Esophagus squamous epithelium (tissue), 5 donors: ENCODE measurements at regions of chr2 and their contacts with region 1.

Region 1: DNA sequence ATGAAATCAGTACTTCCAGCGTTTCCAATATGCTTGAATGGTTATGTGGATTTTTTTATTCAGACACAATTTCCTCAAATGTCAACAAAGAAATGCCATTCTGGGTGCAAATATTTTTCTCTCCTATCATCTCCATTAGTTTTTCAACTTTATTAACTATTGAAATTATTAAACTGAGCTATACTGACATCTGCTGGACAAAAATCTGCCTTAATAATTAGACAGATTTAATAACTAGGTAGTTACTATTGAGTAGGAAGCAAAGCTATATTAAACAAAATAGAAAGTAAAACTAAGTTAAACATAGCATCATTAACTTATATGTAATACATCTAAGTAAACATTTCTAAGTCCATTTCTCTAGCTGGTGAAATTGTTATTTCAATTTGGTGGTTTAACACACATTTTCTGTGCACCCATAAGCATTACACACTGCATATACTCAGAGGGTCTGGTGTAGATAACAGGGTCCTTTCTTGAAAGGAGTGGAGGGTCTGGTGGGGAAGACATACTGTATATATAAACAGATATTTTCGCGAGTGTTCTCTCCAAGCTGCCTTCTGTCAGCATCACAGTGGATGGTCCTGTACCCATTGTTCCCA is 77.0 kb downstream of the LANCL1 start:
- DNase-seq: no peak
- H3K4me3 ChIP-seq: no peak overlapping the region
- H3K27ac ChIP-seq: no peak overlapping the region
- H3K4me1 ChIP-seq: no peaks in the 10 kb centered on the region
- H3K27me3 ChIP-seq: no peaks in the 10 kb centered on the region
- CTCF ChIP-seq: peak in 3 of 6 experiments; percentile 27 to 52 (median 40)
- POLR2A ChIP-seq: no peak

Region 2: DNA sequence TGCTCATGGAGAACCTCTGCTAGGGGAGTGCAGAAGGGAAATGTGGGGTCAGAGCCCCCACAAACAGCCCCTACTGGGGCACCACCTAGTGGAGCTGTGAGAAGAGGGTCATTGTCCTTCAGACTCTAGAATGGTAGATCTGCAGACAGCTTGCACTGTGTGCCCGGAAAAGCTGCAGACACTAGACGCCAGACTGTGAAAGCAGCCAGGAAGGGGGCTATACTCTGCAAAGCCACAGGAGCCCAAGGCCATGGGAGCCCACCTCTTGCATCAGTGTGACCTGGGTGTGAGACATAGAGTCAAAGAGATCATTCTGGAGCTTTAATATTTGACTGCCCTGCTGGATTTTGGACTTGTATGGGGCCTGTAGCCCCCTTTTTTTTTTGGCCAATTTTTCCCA is 336.2 kb before region 1 on chr2:
- intact Hi-C with region 1: no loop called
- DNase-seq: no peak
- H3K4me3 ChIP-seq: no peak overlapping the region
- H3K27ac ChIP-seq: no peak overlapping the region
- H3K4me1 ChIP-seq: no peaks in the 10 kb centered on the region
- H3K27me3 ChIP-seq: no peaks in the 10 kb centered on the region
- CTCF ChIP-seq: no peak
- POLR2A ChIP-seq: no peak

Region 3: DNA sequence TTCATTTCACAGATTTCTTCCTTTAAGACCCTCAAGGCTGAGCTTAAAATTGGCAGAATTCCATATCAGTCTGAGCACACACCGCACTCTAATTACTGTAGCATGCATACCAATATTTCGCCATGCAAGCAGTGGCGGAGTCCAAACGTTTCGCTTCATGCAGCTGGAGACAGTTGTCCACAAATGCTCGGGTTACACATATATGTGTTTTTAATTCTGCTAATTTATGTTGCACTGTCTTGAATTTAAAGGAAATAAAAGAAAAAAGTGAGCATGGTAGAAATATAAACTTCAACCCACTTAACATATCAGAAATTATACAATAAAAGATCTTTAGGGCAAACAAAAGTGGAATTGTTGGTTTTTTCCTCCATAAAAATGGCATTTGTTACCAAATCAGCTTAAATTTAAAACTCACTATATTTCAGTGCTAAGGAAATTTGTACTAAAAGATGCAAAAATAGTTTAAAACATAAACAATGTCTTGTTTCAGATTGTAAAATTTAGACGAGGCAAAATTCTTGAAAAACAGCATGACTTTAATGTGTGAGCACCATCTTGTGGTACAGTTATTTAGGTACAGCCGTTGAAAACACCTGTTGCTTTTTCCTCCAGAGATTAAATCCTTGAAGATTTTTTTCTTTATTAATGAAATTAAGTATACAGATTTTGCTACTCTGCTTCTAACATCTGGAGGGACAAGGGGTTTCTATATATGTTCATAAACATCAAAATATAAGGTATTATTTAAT is 204.3 kb before region 1 on chr2:
- intact Hi-C with region 1: no loop called
- DNase-seq: no peak
- H3K4me3 ChIP-seq: peak overlapping the region in 1 of 4 donors; percentile 43
- H3K27ac ChIP-seq: no peak overlapping the region
- H3K4me1 ChIP-seq: peaks cover 0 to 3% (median 3%) of the 10 kb centered on the region in 3 donors
- H3K27me3 ChIP-seq: no peaks in the 10 kb centered on the region
- CTCF ChIP-seq: peak; percentile 24 to 74 (median 66)
- POLR2A ChIP-seq: no peak

Region 4: DNA sequence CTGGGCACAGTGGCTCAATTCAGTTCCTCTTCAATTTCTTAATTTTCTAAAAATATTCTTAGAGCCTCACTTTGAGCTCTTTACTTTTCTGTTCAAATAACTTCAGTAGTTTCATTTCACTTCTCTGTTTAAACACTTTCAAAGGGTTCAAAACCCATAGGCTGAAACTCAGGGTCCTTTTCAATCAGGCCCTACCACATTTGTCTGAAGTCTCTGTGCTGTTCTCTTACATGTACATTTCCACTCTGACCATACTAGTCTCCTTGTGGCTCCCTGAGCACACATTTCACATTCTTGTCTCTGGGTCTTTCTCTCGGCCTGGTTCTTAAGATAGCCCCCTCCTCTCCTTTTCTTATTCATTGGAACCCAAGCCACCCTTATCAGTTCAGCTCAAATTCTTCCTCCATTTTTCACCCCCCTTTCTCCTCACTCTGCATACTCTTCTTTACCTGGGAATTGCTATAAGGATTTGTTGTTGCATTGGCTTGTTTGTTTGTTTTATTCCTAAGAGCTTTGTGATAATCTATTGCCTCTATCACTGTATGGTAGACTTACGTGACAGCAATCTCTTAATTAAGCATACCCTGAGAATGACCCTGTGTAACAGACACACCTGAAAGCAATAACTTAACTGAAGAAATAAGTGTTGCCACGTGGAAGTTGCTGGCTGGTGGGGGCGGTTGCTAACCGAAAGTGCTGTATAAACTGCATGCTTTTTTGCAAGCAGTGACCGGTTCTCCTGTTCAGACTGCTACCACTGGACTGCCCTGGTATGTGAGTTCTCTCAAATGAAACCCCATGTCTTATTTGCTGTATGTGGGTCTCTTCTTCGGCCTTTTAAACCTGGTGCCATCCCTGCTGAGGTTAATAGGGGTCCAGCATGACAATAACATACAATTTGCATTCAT is 146.6 kb before region 1 on chr2:
- intact Hi-C with region 1: loop called (anchors 10 kb)
- DNase-seq: no peak
- H3K4me3 ChIP-seq: no peak overlapping the region
- H3K27ac ChIP-seq: no peak overlapping the region
- H3K4me1 ChIP-seq: no peaks in the 10 kb centered on the region
- H3K27me3 ChIP-seq: no peaks in the 10 kb centered on the region
- CTCF ChIP-seq: no peak
- POLR2A ChIP-seq: no peak

Region 5: GRCh38 chr2:210496512-210496911 is 97.0 kb after region 1 on chr2:
- intact Hi-C with region 1: no loop called
- DNase-seq: no peak
- H3K4me3 ChIP-seq: no peak overlapping the region
- H3K27ac ChIP-seq: no peak overlapping the region
- H3K4me1 ChIP-seq: no peaks in the 10 kb centered on the region
- H3K27me3 ChIP-seq: no peaks in the 10 kb centered on the region
- CTCF ChIP-seq: no peak
- POLR2A ChIP-seq: no peak